ENCODE measurements at regions of chr17 and their contacts with region 1.

Region 1: GRCh38 chr17:11986942-11987329 is 10.3 kb downstream of the ZNF18 start:
- DNase-seq: peak; percentile 47
- H3K4me3 ChIP-seq: no peak overlapping the region
- H3K27ac ChIP-seq: no peak overlapping the region
- H3K4me1 ChIP-seq: no peaks in the 10 kb centered on the region
- H3K27me3 ChIP-seq: no peaks in the 10 kb centered on the region
- CTCF ChIP-seq: peak; percentile 57 to 60

Region 2: GRCh38 chr17:10646392-10646990 is 1340.4 kb before region 1 on chr17:
- CTCF ChIA-PET with region 1: no interaction called
- dilution Hi-C with region 1: no loop called
- in situ Hi-C with region 1: loop called in 1 of 2 experiments (anchors 25 kb)
- intact Hi-C with region 1: loop called (anchors 2 kb)
- DNase-seq: peak; percentile 34
- H3K4me3 ChIP-seq: no peak overlapping the region
- H3K27ac ChIP-seq: no peak overlapping the region
- H3K4me1 ChIP-seq: no peaks in the 10 kb centered on the region
- H3K27me3 ChIP-seq: no peaks in the 10 kb centered on the region
- CTCF ChIP-seq: peak; percentile 90

Region 3: GRCh38 chr17:10737168-10737622 is 1249.7 kb before region 1 on chr17:
- CTCF ChIA-PET with region 1: no interaction called
- dilution Hi-C with region 1: no loop called
- in situ Hi-C with region 1: loop called in 1 of 2 experiments (anchors 25 kb)
- intact Hi-C with region 1: loop called (anchors 1 kb)
- DNase-seq: peak; percentile 21
- H3K4me3 ChIP-seq: no peak overlapping the region
- H3K27ac ChIP-seq: no peak overlapping the region
- H3K4me1 ChIP-seq: no peaks in the 10 kb centered on the region
- H3K27me3 ChIP-seq: no peaks in the 10 kb centered on the region
- CTCF ChIP-seq: peak; percentile 67 to 86

Region 4: GRCh38 chr17:10875979-10876555 is 1110.9 kb before region 1 on chr17:
- CTCF ChIA-PET with region 1: no interaction called
- dilution Hi-C with region 1: no loop called
- in situ Hi-C with region 1: loop called in 1 of 2 experiments (anchors 25 kb)
- intact Hi-C with region 1: loop called (anchors 1 kb)
- DNase-seq: peak; percentile 11
- H3K4me3 ChIP-seq: no peak overlapping the region
- H3K27ac ChIP-seq: no peak overlapping the region
- H3K4me1 ChIP-seq: no peaks in the 10 kb centered on the region
- H3K27me3 ChIP-seq: no peaks in the 10 kb centered on the region
- CTCF ChIP-seq: peak; percentile 34 to 62

Region 5: DNA sequence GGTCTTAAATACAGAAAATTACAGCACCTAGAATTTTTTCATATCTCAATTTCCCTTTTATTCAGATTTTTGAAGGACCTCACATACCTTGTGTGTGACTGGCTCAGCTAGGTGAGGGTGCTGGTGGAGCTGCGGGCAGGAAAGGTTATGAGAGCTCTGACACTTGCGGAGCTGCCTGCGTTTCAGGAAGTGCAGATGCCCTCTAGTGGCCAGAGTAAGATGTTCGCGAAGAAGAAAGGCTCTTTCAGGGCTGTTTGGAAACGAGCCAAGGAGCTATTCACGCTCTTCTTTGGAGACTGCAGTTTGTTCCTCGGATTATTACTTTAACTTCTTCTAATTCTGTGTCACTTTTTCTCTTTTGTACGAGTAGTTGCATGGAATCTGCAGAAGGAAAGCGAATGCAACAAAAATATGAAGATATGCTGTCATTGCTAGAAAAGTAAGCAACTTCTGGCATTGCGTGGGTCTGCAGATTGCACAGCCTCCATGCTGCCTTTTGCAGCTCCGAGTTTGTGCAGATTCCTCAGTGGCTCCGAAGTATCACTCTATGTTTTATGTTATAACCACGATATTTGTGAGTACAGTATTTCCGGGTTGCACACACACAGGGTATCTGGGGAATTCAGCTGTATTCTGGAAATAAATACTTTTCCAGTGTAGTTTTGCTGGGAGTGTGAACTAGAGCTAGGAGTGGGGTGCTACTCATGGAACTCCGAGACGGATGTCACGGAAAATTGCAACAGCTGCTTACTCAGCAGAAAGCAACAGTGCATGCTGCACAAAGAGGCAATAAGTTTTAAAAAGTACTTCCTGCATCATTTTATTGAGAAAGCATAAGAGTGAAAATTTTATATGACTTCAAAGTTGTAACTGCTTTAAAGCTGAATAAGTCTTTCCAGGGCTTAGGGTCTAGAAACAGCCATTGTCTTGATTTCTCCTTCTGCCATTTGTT is 342.4 kb before region 1 on chr17:
- CTCF ChIA-PET with region 1: no interaction called
- dilution Hi-C with region 1: no loop called
- in situ Hi-C with region 1: no loop called
- intact Hi-C with region 1: loop called (anchors 10 kb)
- DNase-seq: peak; percentile 40
- H3K4me3 ChIP-seq: no peak overlapping the region
- H3K27ac ChIP-seq: no peak overlapping the region
- H3K4me1 ChIP-seq: no peaks in the 10 kb centered on the region
- H3K27me3 ChIP-seq: no peaks in the 10 kb centered on the region
- CTCF ChIP-seq: peak; percentile 66 to 68

Region 6: DNA sequence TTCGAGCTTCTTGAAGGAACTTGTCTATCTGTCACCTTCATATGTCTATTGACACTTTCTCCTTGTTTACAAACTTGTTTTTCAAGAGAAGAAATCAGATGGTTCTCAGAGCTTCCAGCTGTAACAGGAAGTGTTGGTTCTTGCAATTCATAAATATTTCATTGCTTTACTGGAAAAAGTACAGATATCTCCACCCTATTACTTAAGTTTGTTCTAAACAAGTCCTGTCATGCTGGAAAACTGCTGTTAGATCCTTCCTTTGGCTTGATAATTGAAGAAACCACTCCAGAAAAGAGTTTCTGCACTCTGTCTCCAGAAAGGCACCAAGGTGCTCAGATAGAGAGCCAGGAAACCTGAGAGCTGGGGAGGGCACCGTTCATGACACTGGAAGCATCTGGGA is 207.0 kb before region 1 on chr17:
- CTCF ChIA-PET with region 1: no interaction called
- dilution Hi-C with region 1: no loop called
- in situ Hi-C with region 1: no loop called
- intact Hi-C with region 1: no loop called
- DNase-seq: no peak
- H3K4me3 ChIP-seq: no peak overlapping the region
- H3K27ac ChIP-seq: no peak overlapping the region
- H3K4me1 ChIP-seq: no peaks in the 10 kb centered on the region
- H3K27me3 ChIP-seq: no peaks in the 10 kb centered on the region
- CTCF ChIP-seq: no peak

Region 7: GRCh38 chr17:11889266-11889665 is 97.7 kb before region 1 on chr17:
- CTCF ChIA-PET with region 1: no interaction called
- dilution Hi-C with region 1: no loop called
- in situ Hi-C with region 1: no loop called
- intact Hi-C with region 1: no loop called
- DNase-seq: no peak
- H3K4me3 ChIP-seq: no peak overlapping the region
- H3K27ac ChIP-seq: no peak overlapping the region
- H3K4me1 ChIP-seq: no peaks in the 10 kb centered on the region
- H3K27me3 ChIP-seq: no peaks in the 10 kb centered on the region
- CTCF ChIP-seq: no peak

Region 8: DNA sequence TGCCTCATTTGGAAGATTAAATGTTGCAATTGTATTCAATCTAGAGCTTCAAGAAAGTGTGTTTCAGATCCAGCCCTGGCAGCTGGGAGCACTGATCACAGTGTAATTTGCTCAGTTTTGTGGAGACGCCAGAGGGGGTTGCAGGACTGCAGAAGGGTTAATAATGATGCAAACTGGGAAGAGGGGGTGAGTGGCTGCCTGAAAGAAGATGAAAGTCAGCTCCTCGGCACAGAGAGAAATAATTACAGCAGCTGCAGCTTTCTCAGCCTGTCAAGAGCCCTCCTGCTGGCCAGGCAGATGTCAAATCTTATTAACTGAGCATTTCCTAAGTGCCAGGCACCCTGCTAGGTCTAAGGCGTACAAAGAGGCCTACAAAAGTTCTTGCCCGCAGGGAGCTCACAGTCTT is 87.4 kb before region 1 on chr17:
- CTCF ChIA-PET with region 1: no interaction called
- dilution Hi-C with region 1: no loop called
- in situ Hi-C with region 1: no loop called
- intact Hi-C with region 1: loop called (anchors 5 kb)
- DNase-seq: no peak
- H3K4me3 ChIP-seq: no peak overlapping the region
- H3K27ac ChIP-seq: no peak overlapping the region
- H3K4me1 ChIP-seq: no peaks in the 10 kb centered on the region
- H3K27me3 ChIP-seq: no peaks in the 10 kb centered on the region
- CTCF ChIP-seq: peak in 1 of 2 donors; percentile 13

Region 9: DNA sequence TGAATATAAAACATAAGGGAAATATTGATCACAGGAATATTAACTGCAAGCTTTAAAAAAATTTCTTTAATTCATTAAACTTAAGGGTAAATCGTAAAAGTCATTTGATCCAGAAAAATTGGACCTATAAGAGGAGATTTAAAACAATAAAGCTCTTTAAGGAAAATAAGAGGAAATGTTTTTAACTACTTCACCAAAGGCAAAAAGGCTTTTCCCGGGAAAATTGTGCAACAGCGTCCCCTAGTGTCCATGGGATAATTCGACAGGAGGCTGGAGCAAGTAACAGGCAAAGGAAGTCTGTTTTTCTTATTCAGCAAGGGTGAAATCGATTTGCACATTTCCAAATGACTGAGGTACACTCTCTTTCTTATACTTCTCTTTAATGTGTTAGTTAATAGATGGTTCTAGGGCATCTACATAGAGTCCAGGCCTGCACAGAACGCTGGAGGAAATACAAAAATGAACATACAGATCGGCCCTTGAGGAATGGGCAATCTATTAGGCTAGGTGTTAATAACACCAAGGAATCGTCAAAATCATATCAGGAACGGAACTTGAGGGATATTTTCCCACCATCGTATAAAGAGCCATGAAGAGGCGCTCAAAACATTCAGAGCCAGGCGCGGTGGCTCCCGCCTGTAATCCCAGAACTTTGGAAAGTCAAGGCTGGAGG is 51.1 kb before region 1 on chr17:
- CTCF ChIA-PET with region 1: no interaction called
- dilution Hi-C with region 1: no loop called
- in situ Hi-C with region 1: no loop called
- intact Hi-C with region 1: loop called (anchors 2 kb)
- DNase-seq: peak; percentile 51
- H3K4me3 ChIP-seq: no peak overlapping the region
- H3K27ac ChIP-seq: no peak overlapping the region
- H3K4me1 ChIP-seq: no peaks in the 10 kb centered on the region
- H3K27me3 ChIP-seq: no peaks in the 10 kb centered on the region
- CTCF ChIP-seq: peak; percentile 99

Region 10: DNA sequence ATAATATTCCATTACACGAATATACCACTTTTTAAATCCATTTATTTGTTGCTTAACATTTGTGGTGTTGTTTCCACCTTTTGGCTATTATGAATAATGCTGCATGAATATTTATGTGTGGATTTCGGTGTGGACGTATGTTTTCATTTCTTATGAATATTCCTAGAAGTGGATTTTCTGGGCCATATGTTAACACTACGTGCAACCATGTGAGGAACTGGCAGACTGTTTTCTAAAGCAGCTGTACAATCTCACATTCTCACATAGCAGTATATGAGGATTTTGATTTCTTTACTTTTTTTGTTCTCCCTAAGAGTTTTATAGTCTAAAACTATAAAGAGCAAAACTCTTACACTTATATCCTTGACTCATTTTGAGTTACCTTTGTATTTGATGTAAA is 177.1 kb after region 1 on chr17:
- CTCF ChIA-PET with region 1: no interaction called
- dilution Hi-C with region 1: no loop called
- in situ Hi-C with region 1: no loop called
- intact Hi-C with region 1: no loop called
- DNase-seq: no peak
- H3K4me3 ChIP-seq: no peak overlapping the region
- H3K27ac ChIP-seq: no peak overlapping the region
- H3K4me1 ChIP-seq: no peaks in the 10 kb centered on the region
- H3K27me3 ChIP-seq: no peaks in the 10 kb centered on the region
- CTCF ChIP-seq: no peak